Ascending aorta (tissue), 2 donors: ENCODE measurements at regions of chr17 and their contacts with region 1.

Region 1: GRCh38 chr17:7515911-7516610 is 31.9 kb downstream of the POLR2A start:
- DNase-seq: no peak
- H3K4me3 ChIP-seq: no peak overlapping the region
- H3K27ac ChIP-seq: peak overlapping the region in 1 of 2 donors; percentile 18
- H3K4me1 ChIP-seq: no peaks in the 10 kb centered on the region
- H3K27me3 ChIP-seq: no peaks in the 10 kb centered on the region
- CTCF ChIP-seq: no peak

Region 2: GRCh38 chr17:6843241-6843880 is 672.7 kb before region 1 on chr17:
- intact Hi-C with region 1: no loop called
- DNase-seq: no peak
- H3K4me3 ChIP-seq: no peak overlapping the region
- H3K27ac ChIP-seq: no peak overlapping the region
- H3K4me1 ChIP-seq: no peaks in the 10 kb centered on the region
- H3K27me3 ChIP-seq: no peaks in the 10 kb centered on the region
- CTCF ChIP-seq: peak; percentile 14 to 43 (median 22)

Region 3: DNA sequence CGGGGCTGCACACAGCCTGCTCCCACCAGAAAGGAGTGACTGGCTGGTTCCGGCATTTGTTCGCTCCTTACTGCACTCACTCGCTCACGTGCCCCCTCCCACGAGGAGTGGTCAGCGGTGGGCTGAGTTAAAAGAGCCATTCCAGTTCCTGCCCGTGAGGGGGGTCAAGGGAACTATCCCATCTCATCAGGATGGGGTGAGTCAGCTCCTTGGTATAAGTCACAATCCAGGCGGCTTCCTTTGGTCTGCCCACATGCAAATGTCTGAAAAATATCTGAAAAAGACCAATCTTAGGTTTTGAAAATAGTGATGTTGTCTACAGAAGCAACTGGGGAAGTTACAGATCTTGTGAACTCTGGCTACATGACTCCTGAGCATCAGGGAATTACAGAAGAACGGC is 22.8 kb after region 1 on chr17:
- intact Hi-C with region 1: no loop called
- DNase-seq: no peak
- H3K4me3 ChIP-seq: no peak overlapping the region
- H3K27ac ChIP-seq: no peak overlapping the region
- H3K4me1 ChIP-seq: no peaks in the 10 kb centered on the region
- H3K27me3 ChIP-seq: no peaks in the 10 kb centered on the region
- CTCF ChIP-seq: no peak

Region 4: GRCh38 chr17:7589204-7589868 is 73.3 kb after region 1 on chr17:
- intact Hi-C with region 1: loop called (anchors 2 kb)
- DNase-seq: peak; percentile 45 to 92
- H3K4me3 ChIP-seq: peak overlapping the region; percentile 54 to 67
- H3K27ac ChIP-seq: peak overlapping the region; percentile 23 to 60
- H3K4me1 ChIP-seq: peaks cover 8 to 18% of the 10 kb centered on the region in 2 donors
- H3K27me3 ChIP-seq: no peaks in the 10 kb centered on the region
- CTCF ChIP-seq: peak; percentile 89 to 95 (median 93)